ENCODE measurements at regions of chr4 and their contacts with region 1.

Region 1: GRCh38 chr4:183261953-183262775 is 57.9 kb downstream of the CLDN22 start:
- DNase-seq: peak; percentile 69
- H3K4me3 ChIP-seq: no peak overlapping the region
- H3K27ac ChIP-seq: no peak overlapping the region
- H3K4me1 ChIP-seq: no peaks in the 10 kb centered on the region
- CTCF ChIP-seq: peak; percentile 85

Region 2: GRCh38 chr4:182938205-182938645 is 323.9 kb before region 1 on chr4:
- CTCF ChIA-PET with region 1: interaction called, 3 read pairs
- POLR2A ChIA-PET with region 1: no interaction called
- intact Hi-C with region 1: loop called (anchors 1 kb)
- DNase-seq: peak; percentile 39
- H3K4me3 ChIP-seq: no peak overlapping the region
- H3K27ac ChIP-seq: no peak overlapping the region
- H3K4me1 ChIP-seq: no peaks in the 10 kb centered on the region
- CTCF ChIP-seq: peak; percentile 85

Region 3: DNA sequence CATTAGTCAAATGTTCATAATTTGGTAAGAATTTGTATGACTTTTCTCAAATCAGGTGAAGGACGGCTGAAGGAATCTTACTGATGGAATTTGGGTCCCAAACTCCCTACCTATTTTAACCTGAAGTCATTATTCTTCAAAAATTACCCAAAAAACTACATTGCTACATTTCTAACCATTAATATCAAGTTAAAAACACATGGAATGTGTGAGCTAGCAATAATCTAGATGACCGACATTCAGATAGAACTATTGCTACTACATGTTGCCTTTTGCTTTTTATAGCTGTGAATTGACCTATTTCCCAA is 188.4 kb before region 1 on chr4:
- CTCF ChIA-PET with region 1: interaction called, 3 read pairs
- POLR2A ChIA-PET with region 1: interaction called, 3 read pairs
- intact Hi-C with region 1: loop called (anchors 1 kb)
- DNase-seq: no peak
- H3K4me3 ChIP-seq: no peak overlapping the region
- H3K27ac ChIP-seq: no peak overlapping the region
- H3K4me1 ChIP-seq: no peaks in the 10 kb centered on the region
- CTCF ChIP-seq: peak; percentile 51; the same call in 1 of the 2 replicates

Region 4: GRCh38 chr4:183249857-183250256 is 12.3 kb before region 1 on chr4:
- CTCF ChIA-PET with region 1: no interaction called
- POLR2A ChIA-PET with region 1: interaction called, 12 read pairs
- intact Hi-C with region 1: no loop called
- DNase-seq: peak; percentile 10
- H3K4me3 ChIP-seq: no peak overlapping the region
- H3K27ac ChIP-seq: no peak overlapping the region
- H3K4me1 ChIP-seq: no peaks in the 10 kb centered on the region
- CTCF ChIP-seq: peak; percentile 51; the same call in 1 of the 2 replicates

Region 5: GRCh38 chr4:183407128-183407585 is 145.0 kb after region 1 on chr4:
- CTCF ChIA-PET with region 1: no interaction called
- POLR2A ChIA-PET with region 1: no interaction called
- intact Hi-C with region 1: loop called (anchors 5 kb)
- DNase-seq: peak; percentile 83
- H3K4me3 ChIP-seq: peak overlapping the region; percentile 59
- H3K27ac ChIP-seq: no peak overlapping the region
- H3K4me1 ChIP-seq: peaks cover 14% of the 10 kb centered on the region
- CTCF ChIP-seq: peak; percentile 89